Natural killer cell (primary cell): ENCODE measurements at regions of chr6 and their contacts with region 1.

Region 1: DNA sequence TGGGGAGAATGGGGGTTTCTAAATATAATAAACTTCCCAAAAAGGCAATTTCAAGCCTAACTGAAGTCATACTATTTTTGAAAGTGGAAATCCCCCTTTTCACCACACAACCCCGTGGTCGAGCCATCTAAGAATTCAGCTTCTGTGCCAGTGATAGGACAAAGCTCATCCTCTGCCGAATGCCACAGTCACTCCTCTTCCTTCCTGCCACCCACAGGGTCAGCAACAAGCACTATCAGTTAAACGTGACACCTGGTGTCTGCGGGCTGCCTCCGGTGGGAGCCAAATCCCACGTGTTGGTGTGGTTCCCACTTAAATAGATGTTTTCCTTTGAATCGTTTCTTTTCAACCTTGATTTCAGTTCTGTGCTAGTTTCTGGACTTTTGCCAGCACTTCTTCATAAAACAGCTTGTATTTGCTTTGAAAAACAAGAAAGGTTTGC is 60.7 kb downstream of the TNFAIP3 start:
- DNase-seq: peak; percentile 75 to 93
- ATAC-seq: peak; percentile 98 to 100 (median 99)
- H3K4me3 ChIP-seq: no peak overlapping the region
- H3K4me3 Mint-ChIP-seq: peak overlapping the region; percentile 78
- H3K27ac ChIP-seq: peak overlapping the region; percentile 38
- H3K27ac Mint-ChIP-seq: peak overlapping the region; percentile 67 to 90
- H3K4me1 ChIP-seq: peaks cover 25% of the 10 kb centered on the region
- H3K4me1 Mint-ChIP-seq: peaks cover 28 to 32% of the 10 kb centered on the region in 2 donors
- H3K27me3 ChIP-seq: no peaks in the 10 kb centered on the region
- H3K27me3 Mint-ChIP-seq: peaks cover 0 to 3% of the 10 kb centered on the region in 2 donors
- CTCF ChIP-seq: no peak

Region 2: DNA sequence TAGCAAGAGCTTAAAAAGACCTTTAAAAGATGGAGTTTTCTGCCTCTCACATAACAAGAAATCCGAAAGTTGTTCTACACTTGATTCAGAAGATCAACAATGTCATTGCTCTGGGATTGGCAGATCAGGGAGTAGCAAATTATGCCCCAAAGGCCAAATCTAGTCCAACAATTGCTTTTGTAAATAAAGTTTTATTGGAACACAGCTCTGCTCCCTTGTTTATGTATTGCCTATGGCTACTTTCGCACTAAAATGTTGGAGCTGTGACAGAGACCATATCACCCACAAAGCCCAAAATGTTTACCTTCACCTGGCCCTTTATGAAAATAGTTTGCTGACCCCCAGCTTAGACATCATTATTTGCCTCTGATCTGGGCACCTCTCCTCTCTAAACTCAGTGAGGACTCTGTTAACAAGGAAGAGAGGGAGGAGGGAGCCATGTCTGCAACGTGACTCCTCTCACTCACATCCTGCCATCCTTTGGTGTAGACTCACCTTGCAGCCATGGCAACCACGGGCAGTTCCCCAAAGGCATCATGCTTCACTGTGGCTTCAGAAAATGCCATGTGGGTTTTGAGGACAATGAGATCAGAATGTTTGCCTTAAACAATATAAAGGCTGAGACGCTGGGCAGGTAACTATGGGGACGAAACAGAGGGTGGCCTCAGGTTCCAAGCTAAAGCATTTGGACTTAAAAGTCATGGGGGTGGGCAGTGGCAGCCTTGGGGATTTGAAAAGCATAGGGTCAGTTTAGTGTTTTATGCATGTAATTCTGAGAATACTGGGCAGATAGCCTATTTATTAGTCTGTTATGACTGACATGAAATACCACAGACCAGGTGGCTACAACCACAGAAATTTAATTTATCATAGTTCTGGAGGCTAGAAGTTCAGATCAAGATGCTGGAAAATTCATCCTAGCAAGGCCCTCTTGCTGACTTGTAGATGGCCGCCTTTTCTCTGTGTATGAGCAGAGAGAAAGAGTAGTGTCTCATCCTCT is 210.4 kb before region 1 on chr6:
- intact Hi-C with region 1: loop called (anchors 2 kb)
- DNase-seq: peak; percentile 60 to 94
- ATAC-seq: peak; percentile 48 to 58 (median 52)
- H3K4me3 ChIP-seq: no peak overlapping the region
- H3K4me3 Mint-ChIP-seq: peak overlapping the region; percentile 74
- H3K27ac ChIP-seq: peak overlapping the region; percentile 81
- H3K27ac Mint-ChIP-seq: peak overlapping the region; percentile 87 to 97
- H3K4me1 ChIP-seq: peaks cover 21% of the 10 kb centered on the region
- H3K4me1 Mint-ChIP-seq: peaks cover 55 to 59% of the 10 kb centered on the region in 2 donors
- H3K27me3 ChIP-seq: no peaks in the 10 kb centered on the region
- H3K27me3 Mint-ChIP-seq: peaks cover 4 to 15% of the 10 kb centered on the region in 2 donors
- CTCF ChIP-seq: no peak

Region 3: DNA sequence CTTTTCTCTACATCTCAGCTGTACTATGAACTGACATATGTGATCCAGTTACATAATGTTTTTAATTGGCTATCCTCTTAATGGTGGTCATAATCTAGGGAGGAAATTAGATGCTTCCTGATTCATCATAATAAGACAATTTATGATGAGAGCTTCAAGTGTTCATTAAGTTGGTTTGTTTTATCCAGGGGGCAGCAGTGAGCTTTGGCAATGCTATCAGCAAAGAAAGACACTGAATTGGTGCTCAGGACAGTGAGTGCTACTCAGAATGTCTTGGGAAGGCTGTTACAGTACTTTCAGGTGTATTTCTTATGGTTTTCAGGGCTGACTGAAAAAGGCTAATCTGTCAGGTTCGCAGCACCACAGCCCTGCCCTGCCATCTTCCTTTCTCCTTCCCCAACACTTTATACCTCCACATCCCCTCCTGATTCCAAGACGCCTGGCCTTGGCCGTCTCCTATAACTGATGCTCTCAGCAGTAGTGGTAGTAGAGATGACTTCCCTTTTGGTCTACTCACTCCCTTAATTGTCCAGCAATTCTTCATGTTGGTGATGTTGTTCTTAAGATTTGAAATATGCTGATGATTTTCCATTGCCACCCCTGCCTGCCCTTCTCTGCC is 127.7 kb before region 1 on chr6:
- intact Hi-C with region 1: loop called (anchors 5 kb)
- DNase-seq: peak in 1 of 2 donors; percentile 93
- ATAC-seq: peak; percentile 83 to 90 (median 89)
- H3K4me3 ChIP-seq: no peak overlapping the region
- H3K4me3 Mint-ChIP-seq: no peak overlapping the region
- H3K27ac ChIP-seq: no peak overlapping the region
- H3K27ac Mint-ChIP-seq: peak overlapping the region; percentile 65 to 67
- H3K4me1 ChIP-seq: peaks cover 20% of the 10 kb centered on the region
- H3K4me1 Mint-ChIP-seq: peaks cover 36 to 38% of the 10 kb centered on the region in 2 donors
- H3K27me3 ChIP-seq: no peaks in the 10 kb centered on the region
- H3K27me3 Mint-ChIP-seq: no peaks in the 10 kb centered on the region
- CTCF ChIP-seq: peak; percentile 76

Region 4: DNA sequence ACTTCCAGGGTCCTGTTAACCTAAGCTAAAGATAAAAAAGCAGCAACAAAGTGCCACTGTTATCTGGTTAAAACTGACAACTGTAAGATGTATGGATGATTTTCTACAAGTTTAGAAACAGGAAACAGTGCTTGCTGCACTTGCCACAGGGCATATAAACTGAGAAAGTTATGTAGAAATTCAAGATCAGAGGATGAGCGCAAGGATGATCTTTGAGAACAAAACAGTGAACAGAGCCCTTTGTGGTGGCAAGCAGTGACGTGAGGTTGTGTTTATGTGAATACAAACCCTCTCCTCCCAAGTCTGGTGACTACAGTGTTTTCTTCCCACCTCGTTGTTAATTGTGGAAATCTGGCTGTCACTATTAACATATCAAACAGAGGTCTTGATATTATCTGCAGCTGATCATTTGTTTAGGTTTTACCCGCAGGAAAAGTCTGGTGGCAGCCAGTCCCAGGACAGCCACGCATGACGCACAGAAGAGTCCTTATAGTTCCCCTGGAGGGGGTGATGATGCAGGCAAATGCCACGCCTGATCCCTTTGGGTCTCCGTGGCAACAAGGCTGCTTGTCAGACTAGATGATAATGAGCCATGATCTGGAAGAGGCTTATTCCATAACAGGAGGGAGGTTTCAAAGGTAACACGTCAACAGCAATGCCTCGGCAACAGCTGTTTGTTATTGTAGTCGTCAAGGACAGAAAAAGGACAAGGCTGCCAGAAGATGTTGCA is 103.8 kb before region 1 on chr6:
- intact Hi-C with region 1: loop called (anchors 5 kb)
- DNase-seq: peak; percentile 65 to 96
- ATAC-seq: peak; percentile 51 to 78 (median 73)
- H3K4me3 ChIP-seq: no peak overlapping the region
- H3K4me3 Mint-ChIP-seq: peak overlapping the region; percentile 29
- H3K27ac ChIP-seq: peak overlapping the region; percentile 85
- H3K27ac Mint-ChIP-seq: peak overlapping the region; percentile 92 to 99
- H3K4me1 ChIP-seq: peaks cover 52% of the 10 kb centered on the region
- H3K4me1 Mint-ChIP-seq: peaks cover 76 to 77% of the 10 kb centered on the region in 2 donors
- H3K27me3 ChIP-seq: no peaks in the 10 kb centered on the region
- H3K27me3 Mint-ChIP-seq: no peaks in the 10 kb centered on the region
- CTCF ChIP-seq: no peak

Region 5: GRCh38 chr6:137873273-137873762 is 54.5 kb before region 1 on chr6:
- intact Hi-C with region 1: loop called (anchors 5 kb)
- DNase-seq: peak in 1 of 2 donors; percentile 87
- ATAC-seq: peak; percentile 66 to 73 (median 71)
- H3K4me3 ChIP-seq: no peak overlapping the region
- H3K4me3 Mint-ChIP-seq: peak overlapping the region; percentile 98
- H3K27ac ChIP-seq: peak overlapping the region; percentile 41
- H3K27ac Mint-ChIP-seq: peak overlapping the region; percentile 96 to 98
- H3K4me1 ChIP-seq: peaks cover 36% of the 10 kb centered on the region
- H3K4me1 Mint-ChIP-seq: peaks cover 55 to 66% of the 10 kb centered on the region in 2 donors
- H3K27me3 ChIP-seq: no peaks in the 10 kb centered on the region
- H3K27me3 Mint-ChIP-seq: no peaks in the 10 kb centered on the region
- CTCF ChIP-seq: no peak

Region 6: DNA sequence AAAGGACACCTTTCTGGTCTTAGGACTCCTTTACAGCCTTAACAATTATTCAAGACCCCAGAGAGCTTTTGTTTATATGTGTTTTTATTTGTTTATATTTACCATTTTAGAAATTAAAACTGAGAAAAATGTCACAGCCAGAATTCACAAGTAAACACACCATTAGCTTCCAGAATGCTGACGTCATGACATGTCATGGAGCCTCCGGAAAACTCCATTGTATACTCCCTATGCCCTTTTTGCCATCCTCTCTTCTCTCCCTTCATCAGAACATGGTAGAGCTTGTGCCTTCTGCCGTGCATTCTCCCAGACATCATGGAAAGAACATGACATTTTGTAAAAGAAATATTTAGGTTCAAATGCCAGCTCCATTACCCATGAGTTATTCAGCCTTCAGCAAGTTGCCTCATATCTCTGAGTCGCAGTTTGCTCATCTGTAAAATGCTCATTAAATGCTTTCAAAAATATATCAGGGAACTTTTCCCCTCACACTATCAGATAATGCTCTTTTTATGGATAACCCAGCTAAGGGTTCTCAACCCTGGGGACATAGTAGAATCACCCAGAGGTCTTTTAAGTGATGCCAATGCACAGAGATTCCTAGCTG is 32.9 kb before region 1 on chr6:
- intact Hi-C with region 1: no loop called
- DNase-seq: no peak
- ATAC-seq: no peak
- H3K4me3 ChIP-seq: no peak overlapping the region
- H3K4me3 Mint-ChIP-seq: no peak overlapping the region
- H3K27ac ChIP-seq: no peak overlapping the region
- H3K27ac Mint-ChIP-seq: no peak overlapping the region
- H3K4me1 ChIP-seq: no peaks in the 10 kb centered on the region
- H3K4me1 Mint-ChIP-seq: no peaks in the 10 kb centered on the region
- H3K27me3 ChIP-seq: no peaks in the 10 kb centered on the region
- H3K27me3 Mint-ChIP-seq: peaks cover 0 to 6% of the 10 kb centered on the region in 2 donors
- CTCF ChIP-seq: no peak

Region 7: GRCh38 chr6:137975188-137975940 is 47.6 kb after region 1 on chr6:
- intact Hi-C with region 1: loop called (anchors 1 kb)
- DNase-seq: peak in 1 of 2 donors; percentile 82
- ATAC-seq: peak; percentile 84 to 90 (median 87)
- H3K4me3 ChIP-seq: peak overlapping the region; percentile 15
- H3K4me3 Mint-ChIP-seq: peak overlapping the region; percentile 90
- H3K27ac ChIP-seq: peak overlapping the region; percentile 93
- H3K27ac Mint-ChIP-seq: peak overlapping the region; percentile 87 to 97
- H3K4me1 ChIP-seq: peaks cover 66% of the 10 kb centered on the region
- H3K4me1 Mint-ChIP-seq: peaks cover 64 to 74% of the 10 kb centered on the region in 2 donors
- H3K27me3 ChIP-seq: no peaks in the 10 kb centered on the region
- H3K27me3 Mint-ChIP-seq: no peaks in the 10 kb centered on the region
- CTCF ChIP-seq: peak; percentile 60